ENCODE measurements at regions of chr3 and their contacts with region 1.

Region 1: DNA sequence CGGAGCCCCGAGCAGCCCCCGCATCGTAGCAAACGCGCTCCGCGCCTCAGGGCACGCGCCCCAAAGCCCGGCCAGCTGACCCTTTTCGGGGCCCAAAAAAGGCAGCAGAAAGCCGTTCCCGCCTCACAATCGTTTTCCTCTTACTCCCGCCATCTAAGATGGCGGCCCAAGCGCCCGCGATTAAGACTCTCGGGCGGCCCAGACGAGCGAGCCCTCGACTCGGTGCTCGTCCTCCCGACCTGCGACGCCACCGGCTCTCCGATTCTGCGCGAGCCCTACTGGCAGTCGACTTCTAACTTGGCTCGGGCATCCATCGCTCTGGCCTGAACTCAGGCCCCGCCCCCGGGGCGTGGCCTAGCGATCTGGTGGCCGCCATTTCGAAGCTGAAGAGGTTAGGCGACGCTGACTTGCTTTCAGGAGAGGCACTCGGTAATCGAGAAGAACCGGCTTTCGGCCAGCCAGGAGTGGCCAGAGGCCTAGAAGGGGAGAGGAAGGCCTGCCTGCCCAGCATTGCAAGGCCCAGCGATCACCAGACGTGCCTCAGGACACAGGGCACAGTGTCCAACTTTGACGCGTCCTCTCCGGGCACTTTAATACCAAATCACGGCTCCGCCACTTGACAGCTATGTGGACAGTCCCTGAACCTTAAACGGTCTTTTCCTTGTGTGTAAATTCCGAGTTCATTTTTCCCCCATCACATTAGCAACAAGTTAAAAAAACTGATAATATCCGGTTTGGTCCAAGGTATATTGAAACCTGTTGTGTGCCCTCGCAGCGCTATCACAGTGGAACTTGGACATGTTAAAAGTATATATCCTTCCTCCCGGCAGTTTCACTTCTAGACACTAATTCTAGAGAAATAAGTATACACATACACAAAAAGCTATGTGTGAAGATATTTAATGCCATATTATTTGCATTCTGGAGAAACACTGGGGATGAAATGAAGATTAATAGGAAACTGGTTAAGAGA is at the start of gene RAF1:
- DNase-seq: peak; percentile 99
- H3K4me3 ChIP-seq: peak within 1 kb of the TSS; percentile 72 to 100 (median 91)
- H3K27ac ChIP-seq: peak within 1 kb of the TSS; percentile 94 to 100 (median 99)
- H3K4me1 ChIP-seq: peaks cover 0 to 40% (median 34%) of the 10 kb centered on the region in 4 donors
- H3K27me3 ChIP-seq: no peaks in the 10 kb centered on the region
- CTCF ChIP-seq: no peak
- EP300 ChIP-seq: no peak
- POLR2A ChIP-seq: peak; percentile 60 to 78
- total RNA-seq, gene RAF1: 83.8 to 101 (median 95.1) TPM

Region 2: DNA sequence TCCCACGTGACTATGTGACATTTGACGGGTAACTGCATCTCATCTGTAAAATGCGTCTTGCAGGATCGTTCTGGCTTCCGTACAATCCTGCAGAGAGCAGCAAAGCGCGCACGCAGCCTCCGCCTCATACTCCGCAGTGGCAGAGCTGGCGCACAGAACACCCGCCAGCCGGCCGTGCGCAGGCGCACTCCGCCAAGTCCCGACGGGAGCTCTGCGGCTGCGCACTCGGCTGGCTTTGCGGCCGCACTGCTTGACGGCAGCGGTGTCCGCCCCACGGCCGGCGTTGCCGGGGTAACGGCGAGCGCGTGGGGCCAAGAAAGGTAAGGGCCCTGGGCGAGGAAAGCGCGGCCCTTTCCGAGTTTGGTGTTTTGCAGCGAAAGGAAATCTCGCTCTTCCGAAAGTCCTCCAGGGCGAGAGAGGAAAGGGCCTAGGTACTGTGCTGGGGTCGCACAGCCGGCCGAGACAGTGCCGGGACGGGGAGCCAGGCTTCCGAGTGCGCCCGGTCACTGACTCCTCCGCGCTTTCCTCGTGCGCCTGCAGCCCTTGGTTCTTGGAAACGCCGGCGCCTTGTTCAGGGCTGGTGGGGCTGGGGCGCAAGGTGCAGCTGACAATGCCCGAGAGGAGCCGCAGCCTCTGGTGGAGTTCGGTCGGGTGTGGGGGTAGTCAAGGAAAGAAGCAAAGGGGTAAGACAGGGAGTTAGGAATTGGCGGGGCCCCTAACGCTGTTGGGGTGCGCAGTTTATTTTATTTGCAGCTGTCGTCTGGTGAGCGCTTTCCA is 179.8 kb before region 1 on chr3 and contains the start of gene TSEN2:
- intact Hi-C with region 1: loop called (anchors 5 kb)
- DNase-seq: peak; percentile 97
- H3K4me3 ChIP-seq: peak within 1 kb of the TSS; percentile 60 to 81 (median 76)
- H3K27ac ChIP-seq: peak within 1 kb of the TSS; percentile 78 to 86 (median 82)
- H3K4me1 ChIP-seq: peaks cover 0 to 30% (median 18%) of the 10 kb centered on the region in 4 donors
- H3K27me3 ChIP-seq: no peaks in the 10 kb centered on the region
- CTCF ChIP-seq: no peak
- EP300 ChIP-seq: peak in 1 of 4 donors; percentile 33
- POLR2A ChIP-seq: peak in 1 of 2 donors; percentile 90
- total RNA-seq, gene TSEN2: 16.1 to 23.0 (median 20.4) TPM

Region 3: GRCh38 chr3:12556671-12557472 is 107.3 kb before region 1 on chr3 and contains the start of gene MKRN2:
- intact Hi-C with region 1: loop called (anchors 2 kb)
- DNase-seq: peak; percentile 93
- H3K4me3 ChIP-seq: peak within 1 kb of the TSS; percentile 75 to 94 (median 78)
- H3K27ac ChIP-seq: peak within 1 kb of the TSS; percentile 94 to 99 (median 96)
- H3K4me1 ChIP-seq: peaks cover 0 to 58% (median 42%) of the 10 kb centered on the region in 4 donors
- H3K27me3 ChIP-seq: peaks cover 0 to 18% (median 8%) of the 10 kb centered on the region in 3 donors
- CTCF ChIP-seq: no peak
- EP300 ChIP-seq: no peak
- POLR2A ChIP-seq: peak; percentile 87 to 92
- total RNA-seq, gene MKRN2: 27.4 to 37.4 (median 29.9) TPM

Region 4: GRCh38 chr3:12719984-12720898 is 56.0 kb after region 1 on chr3:
- intact Hi-C with region 1: loop called (anchors 2 kb)
- DNase-seq: peak; percentile 89
- H3K4me3 ChIP-seq: peak overlapping the region in 3 of 4 donors; percentile 32 to 42 (median 41)
- H3K27ac ChIP-seq: peak overlapping the region in 2 of 4 donors; percentile 3 to 15
- H3K4me1 ChIP-seq: peaks cover 0 to 9% (median 7%) of the 10 kb centered on the region in 4 donors
- H3K27me3 ChIP-seq: no peaks in the 10 kb centered on the region
- CTCF ChIP-seq: peak; percentile 67 to 93 (median 88)
- EP300 ChIP-seq: no peak
- POLR2A ChIP-seq: no peak

Region 5: GRCh38 chr3:14144423-14145075 is 1480.3 kb after region 1 on chr3:
- intact Hi-C with region 1: loop called (anchors 10 kb)
- DNase-seq: peak; percentile 92
- H3K4me3 ChIP-seq: peak overlapping the region in 3 of 4 donors; percentile 7 to 24 (median 20)
- H3K27ac ChIP-seq: peak overlapping the region; percentile 81 to 92 (median 84)
- H3K4me1 ChIP-seq: peaks cover 0 to 54% (median 46%) of the 10 kb centered on the region in 4 donors
- H3K27me3 ChIP-seq: no peaks in the 10 kb centered on the region
- CTCF ChIP-seq: no peak
- EP300 ChIP-seq: peak in 3 of 4 donors; percentile 39 to 83 (median 47)
- POLR2A ChIP-seq: no peak

Measured in sigmoid colon (tissue), 7 donors.